Left lung (tissue), 14 donors: ENCODE measurements at regions of chr11 and their contacts with region 1.

Region 1: GRCh38 chr11:12043959-12044819 is 35.8 kb upstream of the DKK3 start:
- DNase-seq: peak; percentile 73 to 87 (median 86)
- ATAC-seq: peak; percentile 77
- H3K4me3 ChIP-seq: no peak overlapping the region
- H3K27ac ChIP-seq: peak overlapping the region; percentile 79 to 81
- H3K4me1 ChIP-seq: peaks cover 0 to 43% of the 10 kb centered on the region in 2 donors
- H3K27me3 ChIP-seq: no peaks in the 10 kb centered on the region
- CTCF ChIP-seq: peak; percentile 84 to 90

Region 2: DNA sequence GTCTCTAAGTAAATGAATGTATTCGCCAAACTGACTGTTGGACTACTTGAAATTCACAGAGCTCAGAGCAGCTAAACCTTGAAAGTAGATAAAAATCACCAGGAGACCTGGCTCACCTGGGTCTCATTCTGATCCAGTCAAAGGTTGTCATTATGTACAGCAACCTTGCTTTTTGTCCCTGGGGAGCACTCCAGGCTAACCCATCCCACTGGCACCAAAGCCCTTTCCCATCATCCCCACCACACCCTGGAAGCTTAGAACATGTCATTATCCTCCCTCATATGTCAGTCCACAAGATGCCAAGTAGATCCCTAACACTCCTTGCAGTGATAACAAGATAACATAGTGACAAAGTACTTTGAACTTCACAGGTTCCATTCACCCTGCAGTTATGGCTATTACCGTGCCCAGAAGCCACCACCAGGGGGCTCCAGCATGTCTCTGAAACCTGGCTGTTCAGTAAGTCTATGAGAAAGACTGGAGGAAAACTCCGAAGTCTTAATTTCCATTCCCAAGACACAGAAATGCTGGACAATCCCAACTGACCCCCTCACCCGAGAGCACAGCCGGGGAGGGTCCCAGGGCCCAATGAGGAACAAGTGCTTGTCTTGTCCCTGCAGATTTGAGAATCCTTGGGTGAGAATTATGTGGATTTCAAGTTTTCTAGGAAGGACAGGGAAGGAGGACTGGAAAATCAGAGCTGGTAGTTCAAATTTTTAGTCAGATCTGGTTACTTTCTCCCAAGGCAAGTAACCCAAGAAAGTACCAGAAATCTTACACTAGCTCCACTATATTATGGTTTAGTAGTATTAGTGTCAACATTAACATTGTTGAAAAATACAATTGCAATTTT is 245.4 kb before region 1 on chr11:
- intact Hi-C with region 1: loop called in 1 of 2 experiments (anchors 10 kb)
- DNase-seq: peak in 3 of 4 donors; percentile 74 to 88 (median 83)
- ATAC-seq: peak; percentile 99
- H3K4me3 ChIP-seq: no peak overlapping the region
- H3K27ac ChIP-seq: no peak overlapping the region
- H3K4me1 ChIP-seq: peaks cover 0 to 4% of the 10 kb centered on the region in 2 donors
- H3K27me3 ChIP-seq: peaks cover 0 to 8% of the 10 kb centered on the region in 2 donors
- CTCF ChIP-seq: peak; percentile 90 to 91

Region 3: GRCh38 chr11:11931461-11932055 is 112.6 kb before region 1 on chr11:
- intact Hi-C with region 1: loop called in 1 of 2 experiments (anchors 5 kb)
- DNase-seq: peak in 2 of 4 donors; percentile 51 to 70
- ATAC-seq: peak; percentile 82
- H3K4me3 ChIP-seq: no peak overlapping the region
- H3K27ac ChIP-seq: no peak overlapping the region
- H3K4me1 ChIP-seq: no peaks in the 10 kb centered on the region
- H3K27me3 ChIP-seq: no peaks in the 10 kb centered on the region
- CTCF ChIP-seq: peak; percentile 51 to 55